ENCODE measurements at regions of chr1 and their contacts with region 1.

Region 1: DNA sequence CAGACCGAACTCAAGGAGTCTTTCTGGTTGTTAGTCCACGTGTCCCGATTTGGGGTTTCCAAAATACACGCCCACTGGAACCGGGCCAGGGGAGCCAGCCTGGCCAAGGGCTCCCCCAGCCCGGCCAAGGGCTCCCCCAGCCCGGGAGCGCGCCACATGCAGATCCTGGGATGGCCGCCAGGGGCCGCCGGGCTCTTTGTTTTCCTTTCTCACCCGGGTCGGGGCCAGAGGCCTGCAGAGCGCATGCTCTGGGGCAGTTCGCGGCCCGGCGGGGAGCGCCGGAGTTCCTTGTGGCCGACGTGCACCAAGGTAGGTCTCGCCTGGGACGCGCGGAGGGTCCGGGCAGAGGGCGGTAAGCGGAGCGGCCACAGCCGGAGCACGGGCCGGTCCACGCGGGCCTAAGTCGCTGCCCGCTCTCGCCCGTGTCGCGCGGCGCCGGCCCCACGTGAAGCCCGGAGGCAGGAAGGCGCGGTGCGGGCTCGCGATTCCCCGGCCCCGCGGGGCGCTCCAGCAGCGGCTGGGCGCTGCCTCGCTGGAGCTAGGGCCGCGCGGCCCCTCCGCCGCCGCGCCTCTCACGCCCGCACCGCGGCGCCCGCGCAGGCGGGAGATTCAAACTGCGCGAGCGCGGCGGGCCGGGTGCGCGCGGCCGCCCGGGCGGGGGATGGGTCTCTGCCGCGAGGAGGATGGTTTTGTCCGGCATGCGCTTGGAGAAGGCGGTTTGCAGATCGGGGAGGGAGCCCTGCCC is 12.3 kb downstream of the RCC1 start:
- DNase-seq: peak; percentile 95
- H3K4me3 ChIP-seq: peak overlapping the region; percentile 51 to 72 (median 67)
- H3K27ac ChIP-seq: peak overlapping the region; percentile 84 to 89 (median 88)
- H3K4me1 ChIP-seq: peaks cover 0 to 17% (median 15%) of the 10 kb centered on the region in 4 donors
- H3K27me3 ChIP-seq: no peaks in the 10 kb centered on the region
- CTCF ChIP-seq: peak; percentile 97 to 98 (median 97)
- EP300 ChIP-seq: no peak
- POLR2A ChIP-seq: no peak

Region 2: DNA sequence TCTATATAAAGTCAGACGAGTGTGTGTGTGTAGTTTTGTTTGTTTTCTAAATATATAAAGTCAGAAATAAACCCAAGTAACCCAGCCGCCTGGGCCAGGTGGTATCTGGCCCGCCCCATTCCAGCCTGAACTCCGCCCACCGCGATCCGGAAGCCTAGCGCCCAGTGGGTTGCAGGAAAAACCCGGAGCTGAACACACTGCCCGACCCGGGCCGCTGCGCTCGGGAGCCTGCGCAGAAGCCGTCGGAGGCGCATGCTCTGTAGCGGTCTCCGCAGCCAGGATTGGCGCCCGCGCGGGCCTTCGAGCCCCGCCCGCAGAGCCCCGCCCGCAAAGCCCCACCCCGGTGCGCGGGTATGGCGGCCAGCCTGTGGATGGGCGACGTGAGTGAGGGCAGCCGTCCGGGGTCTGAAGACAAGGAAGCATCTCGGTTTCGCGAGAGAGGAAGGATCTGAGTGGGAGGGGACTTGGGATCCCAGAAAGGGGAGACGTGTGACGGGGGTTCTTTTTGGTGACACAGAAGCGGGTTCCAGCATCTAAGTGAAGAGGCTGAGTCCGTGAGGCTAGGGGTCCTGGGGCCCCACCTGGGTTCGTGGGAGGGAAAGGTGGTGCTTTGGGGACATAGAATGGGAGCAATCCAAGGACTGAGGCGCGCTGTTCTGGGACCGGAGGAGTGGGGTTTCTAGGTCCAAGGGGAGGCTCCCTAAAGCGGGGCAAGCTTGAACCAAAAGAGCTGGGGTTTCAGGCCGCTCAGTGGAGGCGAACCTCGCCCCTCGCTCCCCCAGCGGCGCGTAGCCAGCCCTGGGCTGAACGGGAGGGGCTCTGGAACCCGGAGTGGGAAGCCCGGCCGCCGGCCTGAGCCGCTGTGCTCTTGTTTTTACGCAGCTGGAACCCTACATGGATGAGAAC is 34.8 kb after region 1 on chr1 and contains the start of gene TRNAU1AP:
- intact Hi-C with region 1: loop called (anchors 2 kb)
- DNase-seq: peak; percentile 98
- H3K4me3 ChIP-seq: peak within 1 kb of the TSS; percentile 69 to 83 (median 76)
- H3K27ac ChIP-seq: peak within 1 kb of the TSS; percentile 77 to 89 (median 84)
- H3K4me1 ChIP-seq: peaks cover 0 to 20% (median 5%) of the 10 kb centered on the region in 4 donors
- H3K27me3 ChIP-seq: no peaks in the 10 kb centered on the region
- CTCF ChIP-seq: no peak
- EP300 ChIP-seq: peak in 1 of 4 donors; percentile 68
- POLR2A ChIP-seq: peak; percentile 64 to 81
- total RNA-seq, gene TRNAU1AP: 20.0 to 36.5 (median 29.9) TPM

Region 3: DNA sequence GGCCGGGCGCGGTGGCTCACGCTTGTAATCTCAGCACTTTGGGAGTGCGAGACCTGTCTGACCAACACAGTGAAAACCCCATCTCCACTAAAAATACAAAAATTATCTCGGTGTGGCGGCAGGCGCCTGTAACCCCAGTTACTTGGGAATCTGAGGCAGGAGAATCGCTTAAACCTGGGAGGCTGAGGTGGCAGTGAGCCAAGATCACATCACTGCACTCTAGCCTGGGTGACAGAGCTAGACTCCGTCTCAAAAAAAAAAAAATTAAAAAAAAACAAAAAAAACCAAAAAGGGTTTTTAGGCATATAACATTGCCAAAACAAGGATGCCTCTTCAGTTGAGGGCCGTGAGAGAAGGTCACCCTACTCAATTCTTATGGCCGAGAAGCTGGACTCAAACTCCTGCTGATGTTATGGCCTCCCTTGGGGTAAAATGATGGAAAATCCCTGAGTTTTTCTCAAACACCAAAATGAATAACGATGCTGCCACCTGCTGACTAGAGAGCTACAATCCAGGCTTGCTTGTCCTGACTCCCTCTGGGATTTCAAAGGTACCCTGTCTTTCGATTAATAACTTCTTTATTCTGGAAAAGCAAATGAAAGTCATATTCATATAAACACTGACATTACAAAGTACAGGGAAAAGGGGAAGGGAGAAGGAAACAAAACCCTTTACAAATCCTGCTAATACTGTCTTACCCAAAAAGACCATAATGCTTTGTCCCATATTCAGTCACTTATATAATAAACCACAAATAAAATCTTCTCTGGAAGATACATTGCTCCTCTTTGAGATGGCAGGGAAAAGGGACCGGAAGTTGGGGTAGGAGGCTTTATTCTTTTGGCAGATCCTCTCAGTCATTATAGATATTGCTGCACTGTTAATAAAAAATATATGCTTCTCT is 84.6 kb after region 1 on chr1:
- intact Hi-C with region 1: loop called (anchors 1 kb)
- DNase-seq: peak; percentile 75
- H3K4me3 ChIP-seq: no peak overlapping the region
- H3K27ac ChIP-seq: peak overlapping the region in 1 of 4 donors; percentile 41
- H3K4me1 ChIP-seq: peaks cover 0 to 8% (median 0%) of the 10 kb centered on the region in 4 donors
- H3K27me3 ChIP-seq: no peaks in the 10 kb centered on the region
- CTCF ChIP-seq: peak; percentile 14 to 54 (median 49)
- EP300 ChIP-seq: no peak
- POLR2A ChIP-seq: no peak

Region 4: DNA sequence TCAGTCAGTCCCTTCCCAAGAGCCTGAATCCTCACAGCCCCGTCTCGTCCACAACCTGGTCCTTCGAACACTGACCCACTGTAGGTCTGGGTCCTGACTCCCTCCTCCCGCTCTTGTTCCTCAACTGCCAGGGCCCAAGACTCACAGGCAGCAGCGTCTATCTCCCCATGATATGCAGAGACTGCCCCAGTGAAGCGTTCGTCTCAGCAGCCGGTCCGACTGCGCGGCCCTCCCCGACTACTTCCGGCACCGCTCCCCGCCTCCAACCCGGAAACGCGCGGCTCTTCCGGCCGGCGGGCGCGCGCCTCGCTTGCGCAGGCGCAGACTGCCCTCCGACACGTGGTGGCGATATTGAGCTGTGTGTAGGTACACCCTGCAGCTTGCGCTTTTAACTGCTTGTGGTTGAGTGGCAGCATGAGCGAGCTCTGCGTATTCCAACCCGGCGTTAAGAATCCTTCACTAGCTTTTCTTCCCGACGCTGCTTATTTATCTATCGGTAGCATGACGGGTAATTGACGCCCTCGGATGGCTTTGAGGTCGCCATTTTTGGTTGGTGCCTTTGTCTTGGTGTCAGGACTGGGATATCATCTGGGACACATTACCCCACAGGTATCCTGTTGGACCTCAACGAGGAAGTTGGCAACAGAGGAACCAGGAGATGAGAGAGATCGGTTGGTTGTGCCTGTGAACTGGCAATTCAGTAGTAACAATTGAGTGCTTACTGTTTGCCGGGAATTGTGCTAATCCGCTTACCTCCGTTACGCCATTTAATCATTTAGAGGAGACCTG is 124.9 kb after region 1 on chr1 and contains the start of gene TAF12:
- intact Hi-C with region 1: no loop called
- DNase-seq: peak; percentile 95
- H3K4me3 ChIP-seq: peak within 1 kb of the TSS; percentile 68 to 79 (median 70)
- H3K27ac ChIP-seq: peak within 1 kb of the TSS; percentile 85 to 95 (median 92)
- H3K4me1 ChIP-seq: peaks cover 0 to 41% (median 36%) of the 10 kb centered on the region in 4 donors
- H3K27me3 ChIP-seq: no peaks in the 10 kb centered on the region
- CTCF ChIP-seq: peak in 2 of 4 experiments; percentile 23 to 45
- EP300 ChIP-seq: no peak
- POLR2A ChIP-seq: peak; percentile 94 to 95
- total RNA-seq, gene TAF12: 16.8 to 27.5 (median 20.1) TPM

Region 5: GRCh38 chr1:28736450-28737306 is 218.5 kb after region 1 on chr1 and contains the start of gene YTHDF2:
- intact Hi-C with region 1: loop called (anchors 10 kb)
- DNase-seq: peak; percentile 98
- H3K4me3 ChIP-seq: peak within 1 kb of the TSS; percentile 85 to 97 (median 92)
- H3K27ac ChIP-seq: peak within 1 kb of the TSS; percentile 96 to 97 (median 96)
- H3K4me1 ChIP-seq: peaks cover 0 to 50% (median 43%) of the 10 kb centered on the region in 4 donors
- H3K27me3 ChIP-seq: no peaks in the 10 kb centered on the region
- CTCF ChIP-seq: peak; percentile 85 to 96 (median 90)
- EP300 ChIP-seq: no peak
- POLR2A ChIP-seq: peak; percentile 86 to 87
- total RNA-seq, gene YTHDF2: 37.9 to 47.0 (median 42.7) TPM

Region 6: DNA sequence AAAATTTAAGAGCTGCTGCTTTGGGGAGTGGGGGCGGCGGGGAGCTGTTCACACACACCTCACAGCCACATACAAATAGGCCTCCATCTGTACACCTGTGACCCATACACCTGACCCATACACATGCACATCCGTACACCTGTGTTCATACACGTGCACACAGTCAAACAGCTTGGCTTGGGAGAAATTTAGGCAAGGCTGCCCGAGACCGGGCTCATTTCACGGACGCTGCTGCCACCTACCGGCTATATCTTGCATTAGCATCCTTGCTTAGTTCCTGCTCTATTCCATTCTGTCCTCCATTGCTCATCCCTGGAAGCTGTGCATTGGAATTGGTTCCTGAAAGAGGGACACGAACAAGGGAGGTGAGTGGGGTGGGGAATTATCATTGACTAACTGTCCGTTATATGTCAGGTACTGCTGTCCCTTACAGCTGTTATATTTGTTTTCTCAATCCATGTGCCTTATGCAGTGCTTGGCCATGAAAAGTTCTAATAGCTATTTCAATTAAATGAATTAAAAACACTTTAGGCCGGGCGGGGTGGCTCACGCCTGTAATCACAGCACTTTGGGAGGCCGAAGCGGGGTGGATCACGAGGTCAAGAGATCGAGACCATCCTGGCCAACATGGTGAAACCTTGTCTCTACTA is 359.1 kb after region 1 on chr1:
- intact Hi-C with region 1: loop called (anchors 1 kb)
- DNase-seq: peak; percentile 84
- H3K4me3 ChIP-seq: no peak overlapping the region
- H3K27ac ChIP-seq: no peak overlapping the region
- H3K4me1 ChIP-seq: peaks cover 0 to 5% (median 2%) of the 10 kb centered on the region in 4 donors
- H3K27me3 ChIP-seq: no peaks in the 10 kb centered on the region
- CTCF ChIP-seq: peak; percentile 80 to 91 (median 86)
- EP300 ChIP-seq: no peak
- POLR2A ChIP-seq: no peak